ENCODE measurements at regions of chr1 and their contacts with region 1.

Region 1: GRCh38 chr1:43650310-43651085 is 549 bp downstream of the KDM4A start:
- H3K4me3 ChIP-seq: peak overlapping the region; percentile 98
- H3K27ac ChIP-seq: peak overlapping the region; percentile 76
- H3K4me1 ChIP-seq: no peaks in the 10 kb centered on the region
- CTCF ChIP-seq: peak; percentile 37; the same call in 1 of the 2 replicates

Region 2: GRCh38 chr1:43358746-43359693 is 291.5 kb before region 1 on chr1 and contains the start of gene CDC20:
- CTCF ChIA-PET with region 1: no interaction called
- POLR2A ChIA-PET with region 1: interaction called, 10 read pairs
- H3K4me3 ChIP-seq: peak within 1 kb of the TSS; percentile 86
- H3K27ac ChIP-seq: peak within 1 kb of the TSS; percentile 92
- H3K4me1 ChIP-seq: peaks cover 6% of the 10 kb centered on the region
- CTCF ChIP-seq: peak; percentile 39; the same call in 1 of the 2 replicates

Region 3: DNA sequence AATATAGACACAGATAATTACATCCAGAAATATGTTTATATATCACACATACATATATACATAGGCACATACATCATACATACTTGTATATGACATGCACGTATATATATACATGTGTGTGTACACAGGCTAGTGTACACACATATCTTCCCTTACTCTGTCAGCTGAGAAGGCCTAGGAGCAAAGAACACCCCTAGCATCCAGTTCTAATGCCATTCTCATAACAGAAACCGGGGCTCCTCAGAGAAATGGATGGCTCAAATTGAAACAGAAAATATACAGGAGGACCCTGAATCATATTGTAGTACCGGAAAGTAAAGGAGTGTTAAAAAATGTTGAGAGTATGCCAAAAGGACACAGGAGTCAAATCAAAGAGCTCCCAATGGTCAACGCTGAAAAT is 177.0 kb before region 1 on chr1:
- CTCF ChIA-PET with region 1: no interaction called
- POLR2A ChIA-PET with region 1: no interaction called
- H3K4me3 ChIP-seq: no peak overlapping the region
- H3K27ac ChIP-seq: no peak overlapping the region
- H3K4me1 ChIP-seq: no peaks in the 10 kb centered on the region
- CTCF ChIP-seq: no peak

Region 4: DNA sequence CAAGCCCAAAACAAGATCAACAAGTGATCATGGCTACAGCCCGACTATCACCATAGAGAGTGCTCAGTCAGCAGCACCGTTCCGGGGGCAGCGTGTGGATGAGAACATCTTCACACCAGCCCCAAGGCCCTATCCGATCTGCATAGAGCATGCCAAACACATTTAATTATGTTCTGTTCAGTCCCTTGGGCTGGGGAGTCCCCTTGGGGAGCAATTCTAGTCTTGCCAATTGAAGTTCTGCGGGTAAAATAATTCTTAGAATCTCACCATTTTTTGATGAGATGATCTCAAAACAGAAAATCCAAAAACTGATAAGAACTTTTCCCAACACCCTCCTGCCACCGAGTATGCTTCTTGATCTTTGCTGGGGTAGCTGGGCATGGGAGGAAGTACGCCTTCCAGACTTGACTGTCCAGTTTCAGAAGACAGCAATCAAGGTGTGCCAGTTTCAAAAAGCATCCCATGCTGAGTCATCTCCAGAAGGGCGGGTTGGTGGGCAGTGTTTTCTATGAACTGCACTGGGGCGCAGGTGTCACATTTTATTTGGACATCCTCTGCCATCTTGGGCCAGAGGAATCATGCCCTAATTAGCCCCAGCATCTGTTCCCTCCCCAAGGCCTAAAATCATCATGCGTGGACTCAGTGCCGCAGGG is 140.6 kb before region 1 on chr1:
- CTCF ChIA-PET with region 1: no interaction called
- POLR2A ChIA-PET with region 1: no interaction called
- H3K4me3 ChIP-seq: no peak overlapping the region
- H3K27ac ChIP-seq: no peak overlapping the region
- H3K4me1 ChIP-seq: no peaks in the 10 kb centered on the region
- CTCF ChIP-seq: no peak

Region 5: DNA sequence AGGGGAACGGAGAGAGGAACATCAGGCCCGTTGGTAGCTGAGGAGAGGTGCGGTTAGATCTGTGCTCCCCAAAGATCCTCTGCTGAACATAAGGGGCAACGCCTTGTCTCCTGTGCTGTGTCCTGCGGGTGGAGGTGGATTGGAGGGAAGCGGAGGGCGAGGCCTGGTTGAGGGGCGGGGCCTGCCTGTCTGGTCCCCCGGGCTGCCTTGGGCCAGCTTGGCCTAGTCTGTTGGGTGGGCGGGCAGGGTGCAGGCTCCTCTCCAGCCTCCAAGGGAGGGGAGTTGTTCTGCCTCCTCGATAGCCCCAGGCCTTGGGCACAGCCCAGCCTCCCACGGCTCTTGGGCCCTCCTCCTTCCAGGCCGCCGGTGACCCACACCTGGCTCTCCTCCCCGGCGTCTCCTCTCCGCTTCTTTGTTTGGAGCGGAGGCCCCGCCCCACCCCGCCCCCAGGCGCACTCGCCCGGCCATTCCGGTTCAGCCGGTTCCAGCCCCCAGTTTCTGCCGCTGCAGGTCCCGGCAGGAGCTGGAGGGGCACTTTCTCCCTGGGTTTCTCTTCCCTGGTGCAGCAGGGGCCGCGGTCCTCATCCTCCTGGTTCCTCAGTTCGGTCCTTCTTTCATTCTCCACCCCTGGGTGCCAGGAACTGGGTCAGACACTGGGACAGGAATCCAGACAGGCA is 100.4 kb before region 1 on chr1:
- CTCF ChIA-PET with region 1: interaction called, 3 read pairs
- POLR2A ChIA-PET with region 1: interaction called, 15 read pairs
- H3K4me3 ChIP-seq: peak overlapping the region; percentile 17
- H3K27ac ChIP-seq: no peak overlapping the region
- H3K4me1 ChIP-seq: peaks cover 5% of the 10 kb centered on the region; the same call in 1 of the 2 replicates
- CTCF ChIP-seq: no peak

Region 6: GRCh38 chr1:43634721-43635120 is 15.8 kb before region 1 on chr1:
- CTCF ChIA-PET with region 1: interaction called, 6 read pairs
- POLR2A ChIA-PET with region 1: interaction called, 27 read pairs
- H3K4me3 ChIP-seq: no peak overlapping the region
- H3K27ac ChIP-seq: no peak overlapping the region
- H3K4me1 ChIP-seq: no peaks in the 10 kb centered on the region
- CTCF ChIP-seq: no peak

Region 7: GRCh38 chr1:43666608-43667007 is 16.1 kb after region 1 on chr1:
- CTCF ChIA-PET with region 1: no interaction called
- POLR2A ChIA-PET with region 1: interaction called, 32 read pairs
- H3K4me3 ChIP-seq: no peak overlapping the region
- H3K27ac ChIP-seq: no peak overlapping the region
- H3K4me1 ChIP-seq: no peaks in the 10 kb centered on the region
- CTCF ChIP-seq: no peak

Region 8: DNA sequence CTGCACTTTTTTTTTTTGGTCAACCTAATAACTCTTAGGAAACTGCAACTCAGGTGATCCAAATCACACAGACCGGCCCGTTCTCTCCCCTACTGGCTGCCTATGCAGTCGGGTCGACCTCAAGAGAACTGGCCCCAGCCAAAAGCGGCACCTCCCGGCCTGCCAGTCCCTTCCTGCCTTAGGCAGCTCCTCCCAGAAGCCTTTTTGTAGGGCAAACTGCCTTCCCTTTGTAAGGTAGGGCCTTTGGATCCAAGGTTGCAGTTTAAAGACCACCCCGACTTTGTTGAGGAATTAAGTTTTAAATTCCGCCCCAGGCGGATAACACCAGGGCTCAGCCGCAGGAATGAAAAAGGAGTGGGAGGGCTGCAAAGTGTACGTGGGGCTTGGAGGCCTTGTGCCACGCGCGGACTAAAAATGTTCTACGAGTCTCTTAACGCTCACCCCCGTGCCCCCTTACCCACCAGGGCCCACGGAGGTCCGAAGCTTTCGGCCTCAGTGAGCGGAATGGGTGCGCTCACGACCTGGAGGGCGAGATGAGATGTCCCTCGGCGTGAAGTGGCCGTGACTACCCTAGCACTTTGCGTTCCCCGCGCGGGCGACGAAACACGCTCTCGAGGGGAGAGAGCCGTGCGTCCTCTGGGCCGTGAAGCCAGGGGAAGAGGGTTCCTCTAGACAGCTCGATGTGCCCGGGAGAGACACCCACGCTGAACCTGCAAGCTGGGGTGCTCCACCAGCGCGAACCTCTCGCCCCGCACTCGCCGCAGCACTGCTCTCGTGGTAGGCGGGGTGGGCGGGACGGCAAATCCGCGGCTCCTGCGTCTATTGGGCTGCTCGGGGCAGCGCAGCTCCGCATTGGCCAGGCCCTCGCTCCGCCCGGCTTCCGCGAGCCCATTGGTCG is 56.3 kb after region 1 on chr1:
- CTCF ChIA-PET with region 1: no interaction called
- POLR2A ChIA-PET with region 1: interaction called, 21 read pairs
- H3K4me3 ChIP-seq: peak overlapping the region; percentile 79
- H3K27ac ChIP-seq: peak overlapping the region; percentile 68; the same call in 1 of the 2 replicates
- H3K4me1 ChIP-seq: no peaks in the 10 kb centered on the region
- CTCF ChIP-seq: no peak

Region 9: GRCh38 chr1:43783671-43784205 is 133.2 kb after region 1 on chr1:
- CTCF ChIA-PET with region 1: no interaction called
- POLR2A ChIA-PET with region 1: no interaction called
- H3K4me3 ChIP-seq: no peak overlapping the region
- H3K27ac ChIP-seq: no peak overlapping the region
- H3K4me1 ChIP-seq: no peaks in the 10 kb centered on the region
- CTCF ChIP-seq: no peak